Activated CD4-positive, alpha-beta T cell treated with anti-CD3 and anti-CD28 coated beads for 36 hours (primary cell): ENCODE measurements at regions of chr9 and their contacts with region 1.

Region 1: DNA sequence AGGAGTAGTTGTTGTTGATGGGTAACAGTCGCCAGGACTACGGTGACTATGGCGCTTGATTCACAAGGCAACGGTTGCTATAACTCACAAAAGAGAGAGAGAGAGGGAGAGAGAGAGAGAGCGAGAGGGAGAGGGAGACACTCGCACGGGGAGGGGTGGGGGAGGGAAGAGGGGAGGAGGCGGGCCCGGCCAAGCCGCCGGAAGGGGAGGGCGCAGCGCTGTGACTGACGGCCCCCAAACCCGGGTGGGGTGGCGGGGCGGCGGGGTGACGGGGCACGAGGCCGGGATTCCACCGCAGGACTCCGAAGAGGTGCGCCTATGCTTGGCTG is at the start of gene RFX3:
- DNase-seq: peak; percentile 96
- ATAC-seq: peak; percentile 63
- H3K4me3 Mint-ChIP-seq: peak within 1 kb of the TSS; percentile 89
- H3K27ac Mint-ChIP-seq: peak within 1 kb of the TSS; percentile 99
- H3K4me1 Mint-ChIP-seq: peaks cover 39% of the 10 kb centered on the region
- H3K27me3 Mint-ChIP-seq: no peaks in the 10 kb centered on the region
- total RNA-seq, gene RFX3: 12.5 to 16.6 TPM

Region 2: GRCh38 chr9:2158111-2158610 is 1367.6 kb before region 1 on chr9:
- CTCF ChIA-PET with region 1: no interaction called
- POLR2A ChIA-PET with region 1: no interaction called
- intact Hi-C with region 1: loop called in 1 of 2 experiments (anchors 5 kb)
- DNase-seq: peak; percentile 54
- ATAC-seq: peak; percentile 70
- H3K4me3 Mint-ChIP-seq: peak overlapping the region; percentile 81
- H3K27ac Mint-ChIP-seq: peak overlapping the region; percentile 99
- H3K4me1 Mint-ChIP-seq: peaks cover 58% of the 10 kb centered on the region
- H3K27me3 Mint-ChIP-seq: no peaks in the 10 kb centered on the region

Region 3: DNA sequence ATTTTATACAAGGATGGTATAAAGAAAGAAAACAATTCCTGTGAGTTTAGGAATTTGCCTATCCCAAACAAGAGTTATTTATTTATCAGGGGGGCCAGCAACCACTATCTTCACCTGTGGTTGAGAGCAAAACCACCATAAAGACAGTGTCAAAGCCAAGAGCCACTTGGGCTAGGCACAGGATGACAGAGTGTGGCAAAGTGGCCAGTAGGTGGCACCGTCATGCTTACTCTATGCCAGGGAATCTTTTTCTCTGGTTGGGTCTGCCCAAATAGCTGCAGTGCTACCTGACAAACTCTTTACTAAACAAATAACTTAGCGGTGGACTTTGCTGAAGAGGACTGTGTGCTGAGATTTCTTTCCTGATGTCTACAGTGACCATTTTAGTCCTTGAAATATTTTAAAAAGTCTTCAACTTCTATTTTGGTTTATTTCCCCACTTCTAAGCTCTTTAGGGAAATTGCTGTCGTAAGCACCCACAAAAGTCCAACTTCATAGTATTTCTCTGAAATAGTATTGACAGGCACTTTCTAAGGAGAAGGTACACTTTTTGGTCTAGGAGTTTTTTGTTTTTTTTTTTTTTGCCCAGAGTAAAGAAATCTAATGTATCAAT is 285.0 kb before region 1 on chr9:
- CTCF ChIA-PET with region 1: interaction called, 3 read pairs
- POLR2A ChIA-PET with region 1: no interaction called
- intact Hi-C with region 1: loop called (anchors 5 kb)
- DNase-seq: peak; percentile 84
- ATAC-seq: peak; percentile 93
- H3K4me3 Mint-ChIP-seq: no peak overlapping the region
- H3K27ac Mint-ChIP-seq: no peak overlapping the region
- H3K4me1 Mint-ChIP-seq: peaks cover 8% of the 10 kb centered on the region
- H3K27me3 Mint-ChIP-seq: no peaks in the 10 kb centered on the region

Region 4: GRCh38 chr9:3467593-3468219 is 58.1 kb before region 1 on chr9:
- CTCF ChIA-PET with region 1: interaction called, 4 read pairs
- POLR2A ChIA-PET with region 1: interaction called, 4 read pairs
- intact Hi-C with region 1: loop called (anchors 1 to 2 kb)
- DNase-seq: peak; percentile 75
- ATAC-seq: peak; percentile 99
- H3K4me3 Mint-ChIP-seq: no peak overlapping the region
- H3K27ac Mint-ChIP-seq: no peak overlapping the region
- H3K4me1 Mint-ChIP-seq: peaks cover 11% of the 10 kb centered on the region
- H3K27me3 Mint-ChIP-seq: no peaks in the 10 kb centered on the region

Region 5: DNA sequence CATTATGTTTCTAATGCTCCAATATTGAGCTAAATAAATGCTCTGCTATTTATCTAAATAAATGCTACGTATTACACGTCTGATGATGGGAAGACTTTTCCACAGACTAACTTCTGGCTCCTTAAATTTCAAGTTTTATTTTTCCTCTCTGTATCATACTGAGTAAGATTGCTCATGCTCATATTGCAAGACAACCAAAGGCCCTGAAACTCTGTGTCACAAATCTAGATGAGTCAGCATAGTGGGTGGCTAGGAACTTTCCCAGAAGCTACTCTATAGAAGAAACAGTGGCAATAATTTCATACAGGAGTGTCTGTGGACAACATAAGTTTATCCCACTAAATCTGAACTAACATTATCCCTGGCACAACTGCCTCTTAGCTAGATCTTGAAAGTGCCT is 53.0 kb after region 1 on chr9:
- CTCF ChIA-PET with region 1: no interaction called
- POLR2A ChIA-PET with region 1: interaction called, 3 read pairs
- intact Hi-C with region 1: loop called in 1 of 2 experiments (anchors 5 kb)
- DNase-seq: peak; percentile 37
- ATAC-seq: peak; percentile 100
- H3K4me3 Mint-ChIP-seq: no peak overlapping the region
- H3K27ac Mint-ChIP-seq: peak overlapping the region; percentile 68
- H3K4me1 Mint-ChIP-seq: peaks cover 8% of the 10 kb centered on the region
- H3K27me3 Mint-ChIP-seq: no peaks in the 10 kb centered on the region

Region 6: GRCh38 chr9:4020038-4020754 is 494.4 kb after region 1 on chr9:
- CTCF ChIA-PET with region 1: no interaction called
- POLR2A ChIA-PET with region 1: no interaction called
- intact Hi-C with region 1: no loop called
- DNase-seq: no peak
- ATAC-seq: no peak
- H3K4me3 Mint-ChIP-seq: no peak overlapping the region
- H3K27ac Mint-ChIP-seq: no peak overlapping the region
- H3K4me1 Mint-ChIP-seq: no peaks in the 10 kb centered on the region
- H3K27me3 Mint-ChIP-seq: peaks cover 2% of the 10 kb centered on the region

Region 7: DNA sequence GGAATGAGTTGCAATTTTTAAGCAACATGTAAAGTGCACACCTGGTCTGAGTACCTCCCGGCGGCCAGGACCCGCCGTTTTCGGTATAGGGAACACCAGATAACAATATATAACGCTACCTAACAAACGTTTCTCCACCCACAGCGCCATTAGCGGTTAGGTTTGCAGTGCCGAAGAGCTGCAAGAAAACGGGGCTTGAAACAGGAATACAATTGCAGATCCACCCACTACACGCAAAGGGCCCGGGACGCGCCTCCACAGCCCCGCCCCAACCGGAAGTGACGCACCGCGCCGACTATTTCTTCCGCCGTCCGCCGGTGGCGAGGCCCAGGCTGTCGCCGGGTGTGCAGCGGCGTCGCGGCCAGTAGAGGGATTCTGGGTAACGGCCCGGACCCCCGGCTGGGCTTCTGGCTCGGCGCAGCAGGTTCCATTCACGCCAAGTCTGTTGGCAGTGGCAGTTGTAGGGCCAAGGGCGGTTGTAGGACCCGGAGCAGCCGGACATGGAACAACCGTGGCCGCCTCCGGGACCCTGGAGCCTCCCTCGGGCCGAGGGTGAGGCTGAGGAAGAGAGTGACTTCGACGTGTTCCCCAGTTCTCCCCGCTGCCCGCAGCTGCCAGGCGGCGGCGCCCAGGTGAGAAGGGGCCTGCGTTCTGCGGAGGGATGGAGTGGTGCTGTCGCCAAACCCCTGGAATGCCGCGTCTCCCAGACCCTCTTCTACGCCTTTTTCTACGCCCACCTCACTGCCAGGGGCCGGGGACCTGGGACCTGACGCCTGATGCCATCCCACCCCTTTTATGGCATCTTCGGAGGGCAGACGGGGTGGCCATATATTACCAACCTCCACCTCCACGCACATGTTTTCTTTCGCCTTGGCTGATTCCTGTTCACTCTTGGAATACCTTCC is 1153.7 kb after region 1 on chr9 and contains the start of gene CDC37L1:
- CTCF ChIA-PET with region 1: no interaction called
- POLR2A ChIA-PET with region 1: no interaction called
- intact Hi-C with region 1: loop called (anchors 5 kb)
- DNase-seq: peak; percentile 99
- ATAC-seq: peak; percentile 95
- H3K4me3 Mint-ChIP-seq: no peak within 1 kb of the TSS
- H3K27ac Mint-ChIP-seq: no peak within 1 kb of the TSS
- H3K4me1 Mint-ChIP-seq: peaks cover 11% of the 10 kb centered on the region
- H3K27me3 Mint-ChIP-seq: no peaks in the 10 kb centered on the region
- total RNA-seq, gene CDC37L1: 8.0 to 9.8 TPM

Region 8: GRCh38 chr9:4984621-4985385 is 1459.0 kb after region 1 on chr9 and contains the start of gene JAK2:
- CTCF ChIA-PET with region 1: no interaction called
- POLR2A ChIA-PET with region 1: no interaction called
- intact Hi-C with region 1: loop called in 1 of 2 experiments (anchors 5 kb)
- DNase-seq: peak; percentile 91
- ATAC-seq: peak; percentile 84
- H3K4me3 Mint-ChIP-seq: no peak within 1 kb of the TSS
- H3K27ac Mint-ChIP-seq: peak within 1 kb of the TSS; percentile 94
- H3K4me1 Mint-ChIP-seq: peaks cover 54% of the 10 kb centered on the region
- H3K27me3 Mint-ChIP-seq: no peaks in the 10 kb centered on the region
- total RNA-seq, gene JAK2: 19.4 to 19.5 TPM